CD4-positive, alpha-beta memory T cell (primary cell): ENCODE measurements at regions of chr6 and their contacts with region 1.

Region 1: DNA sequence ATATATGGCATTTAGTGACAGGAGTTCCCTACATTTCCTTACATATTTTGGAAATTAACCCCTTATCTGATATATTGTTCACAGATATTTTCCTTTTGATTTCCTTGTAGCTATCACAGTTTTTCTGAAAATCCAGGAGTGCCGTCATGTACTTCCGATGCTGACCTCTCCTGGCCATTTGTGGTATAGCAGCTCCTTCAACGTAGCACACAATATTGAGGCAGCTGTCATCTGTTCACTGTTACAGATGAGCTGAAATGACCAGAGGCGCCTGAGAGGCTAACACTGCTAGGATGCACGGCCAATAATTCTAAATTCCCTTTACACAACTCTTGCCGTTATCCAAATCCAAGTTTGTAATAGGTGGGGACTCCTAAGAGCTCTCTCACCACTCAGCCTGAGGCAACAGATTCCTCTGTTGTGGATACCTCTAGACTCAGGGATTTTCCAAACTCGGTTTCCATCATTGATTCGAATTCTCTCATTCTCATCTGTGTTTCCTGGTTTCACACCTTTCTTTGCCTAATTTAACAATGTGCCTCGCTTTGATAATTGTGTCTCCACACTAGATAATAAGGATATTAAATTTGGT is 53.0 kb downstream of the MMUT start:
- DNase-seq: peak; percentile 11 to 53 (median 31)
- H3K4me3 ChIP-seq: no peak overlapping the region
- H3K4me3 Mint-ChIP-seq: no peak overlapping the region
- H3K27ac ChIP-seq: no peak overlapping the region
- H3K27ac Mint-ChIP-seq: no peak overlapping the region
- H3K4me1 ChIP-seq: no peaks in the 10 kb centered on the region
- H3K4me1 Mint-ChIP-seq: no peaks in the 10 kb centered on the region
- H3K27me3 ChIP-seq: no peaks in the 10 kb centered on the region
- H3K27me3 Mint-ChIP-seq: peaks cover 3% of the 10 kb centered on the region in 2 donors

Region 2: DNA sequence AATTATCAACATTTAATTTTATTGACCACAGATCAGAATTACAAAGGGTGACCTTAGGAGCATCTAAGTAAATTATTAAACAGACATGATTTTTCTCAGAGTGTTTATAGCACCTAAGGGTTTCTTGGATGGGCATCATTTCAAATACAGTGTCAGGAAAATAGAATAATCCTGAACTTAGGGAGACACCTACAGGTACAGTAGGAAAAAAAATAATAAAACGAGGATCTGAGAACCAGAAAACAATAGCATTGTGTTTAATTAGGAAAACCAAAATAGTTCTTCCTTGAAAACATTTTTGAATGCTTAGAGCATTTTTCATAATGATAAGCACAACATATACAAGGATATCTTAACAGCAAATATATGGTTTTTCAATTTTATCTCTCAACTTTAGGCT is 13.8 kb after region 1 on chr6:
- CTCF ChIA-PET with region 1: interaction called, 43 read pairs
- POLR2A ChIA-PET with region 1: no interaction called
- intact Hi-C with region 1: no loop called
- DNase-seq: no peak
- H3K4me3 ChIP-seq: no peak overlapping the region
- H3K4me3 Mint-ChIP-seq: no peak overlapping the region
- H3K27ac ChIP-seq: no peak overlapping the region
- H3K27ac Mint-ChIP-seq: no peak overlapping the region
- H3K4me1 ChIP-seq: no peaks in the 10 kb centered on the region
- H3K4me1 Mint-ChIP-seq: no peaks in the 10 kb centered on the region
- H3K27me3 ChIP-seq: no peaks in the 10 kb centered on the region
- H3K27me3 Mint-ChIP-seq: peaks cover 0 to 2% of the 10 kb centered on the region in 2 donors